Sciatic nerve (tissue), 2 donors: ENCODE measurements at regions of chr4 and their contacts with region 1.

Region 1: GRCh38 chr4:20159516-20159915 is 92.2 kb upstream of the SLIT2 start:
- DNase-seq: no peak
- ATAC-seq: no peak

Region 2: GRCh38 chr4:19803406-19803937 is 356.0 kb before region 1 on chr4:
- intact Hi-C with region 1: no loop called
- DNase-seq: no peak
- ATAC-seq: no peak

Region 3: DNA sequence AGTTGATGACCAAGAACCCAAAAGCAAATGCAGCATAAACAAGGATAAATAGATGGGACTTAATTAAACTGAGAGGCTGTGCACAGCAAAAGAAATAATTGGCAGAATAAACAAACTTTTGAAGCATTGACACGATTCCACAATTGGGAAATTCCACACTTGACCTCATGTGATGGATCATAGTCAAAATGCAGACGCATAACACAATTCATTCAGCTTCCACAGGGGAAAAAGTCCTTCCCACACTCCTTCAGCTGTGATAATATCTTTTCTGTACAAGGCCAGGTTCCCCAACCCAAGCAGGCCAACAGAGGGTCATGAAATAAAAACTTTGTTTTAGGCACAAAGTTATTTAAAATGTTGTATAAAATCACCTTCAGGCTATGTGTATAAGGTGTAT is 25.6 kb after region 1 on chr4:
- intact Hi-C with region 1: no loop called
- DNase-seq: no peak
- ATAC-seq: no peak

Region 4: GRCh38 chr4:20711335-20711734 is 551.8 kb after region 1 on chr4:
- intact Hi-C with region 1: loop called (anchors 5 kb)
- DNase-seq: no peak
- ATAC-seq: no peak